Activated B cell treated with CpG ODN at 0.5 μM for 24 hours (primary cell): ENCODE measurements at regions of chr4 and their contacts with region 1.

Region 1: GRCh38 chr4:139301113-139301820 is at the start of gene NAA15:
- DNase-seq: peak; percentile 93
- ATAC-seq: peak; percentile 91
- H3K4me3 Mint-ChIP-seq: peak within 1 kb of the TSS; percentile 99
- H3K27ac Mint-ChIP-seq: peak within 1 kb of the TSS; percentile 98
- H3K4me1 Mint-ChIP-seq: peaks cover 49% of the 10 kb centered on the region
- H3K27me3 Mint-ChIP-seq: no peaks in the 10 kb centered on the region
- CTCF ChIP-seq: no peak
- total RNA-seq, gene NAA15: 62.6 and 66.5 TPM in 2 replicates

Region 2: GRCh38 chr4:138804711-138805110 is 496.6 kb before region 1 on chr4:
- CTCF ChIA-PET with region 1: no interaction called
- POLR2A ChIA-PET with region 1: no interaction called
- intact Hi-C with region 1: no loop called
- DNase-seq: no peak
- ATAC-seq: no peak
- H3K4me3 Mint-ChIP-seq: no peak overlapping the region
- H3K27ac Mint-ChIP-seq: no peak overlapping the region
- H3K4me1 Mint-ChIP-seq: no peaks in the 10 kb centered on the region
- H3K27me3 Mint-ChIP-seq: peaks cover 11% of the 10 kb centered on the region
- CTCF ChIP-seq: no peak

Region 3: GRCh38 chr4:139083956-139084803 is 217.1 kb before region 1 on chr4:
- CTCF ChIA-PET with region 1: interaction called, 11 read pairs
- POLR2A ChIA-PET with region 1: interaction called, 36 read pairs
- intact Hi-C with region 1: loop called (anchors 1 kb)
- DNase-seq: peak; percentile 79
- ATAC-seq: peak; percentile 66
- H3K4me3 Mint-ChIP-seq: peak overlapping the region; percentile 99
- H3K27ac Mint-ChIP-seq: peak overlapping the region; percentile 99
- H3K4me1 Mint-ChIP-seq: peaks cover 38% of the 10 kb centered on the region
- H3K27me3 Mint-ChIP-seq: no peaks in the 10 kb centered on the region
- CTCF ChIP-seq: no peak

Region 4: GRCh38 chr4:139137763-139138162 is 163.5 kb before region 1 on chr4:
- CTCF ChIA-PET with region 1: no interaction called
- POLR2A ChIA-PET with region 1: no interaction called
- intact Hi-C with region 1: no loop called
- DNase-seq: no peak
- ATAC-seq: no peak
- H3K4me3 Mint-ChIP-seq: no peak overlapping the region
- H3K27ac Mint-ChIP-seq: no peak overlapping the region
- H3K4me1 Mint-ChIP-seq: peaks cover 23% of the 10 kb centered on the region
- H3K27me3 Mint-ChIP-seq: no peaks in the 10 kb centered on the region
- CTCF ChIP-seq: no peak

Region 5: GRCh38 chr4:139253713-139254112 is 47.6 kb before region 1 on chr4:
- CTCF ChIA-PET with region 1: no interaction called
- POLR2A ChIA-PET with region 1: no interaction called
- intact Hi-C with region 1: no loop called
- DNase-seq: no peak
- ATAC-seq: no peak
- H3K4me3 Mint-ChIP-seq: no peak overlapping the region
- H3K27ac Mint-ChIP-seq: no peak overlapping the region
- H3K4me1 Mint-ChIP-seq: peaks cover 4% of the 10 kb centered on the region
- H3K27me3 Mint-ChIP-seq: no peaks in the 10 kb centered on the region
- CTCF ChIP-seq: no peak

Region 6: GRCh38 chr4:139315221-139315675 is 14.0 kb after region 1 on chr4:
- CTCF ChIA-PET with region 1: interaction called, 3 read pairs
- POLR2A ChIA-PET with region 1: interaction called, 14 read pairs
- intact Hi-C with region 1: loop called (anchors 1 kb)
- DNase-seq: no peak
- ATAC-seq: peak; percentile 81
- H3K4me3 Mint-ChIP-seq: peak overlapping the region; percentile 71
- H3K27ac Mint-ChIP-seq: peak overlapping the region; percentile 86
- H3K4me1 Mint-ChIP-seq: peaks cover 77% of the 10 kb centered on the region
- H3K27me3 Mint-ChIP-seq: no peaks in the 10 kb centered on the region
- CTCF ChIP-seq: no peak

Region 7: GRCh38 chr4:139337612-139338011 is 36.3 kb after region 1 on chr4:
- CTCF ChIA-PET with region 1: interaction called, 7 read pairs
- POLR2A ChIA-PET with region 1: no interaction called
- intact Hi-C with region 1: loop called (anchors 5 kb)
- DNase-seq: no peak
- ATAC-seq: no peak
- H3K4me3 Mint-ChIP-seq: no peak overlapping the region
- H3K27ac Mint-ChIP-seq: no peak overlapping the region
- H3K4me1 Mint-ChIP-seq: peaks cover 16% of the 10 kb centered on the region
- H3K27me3 Mint-ChIP-seq: no peaks in the 10 kb centered on the region
- CTCF ChIP-seq: no peak

Region 8: GRCh38 chr4:139441029-139441428 is 139.8 kb after region 1 on chr4:
- CTCF ChIA-PET with region 1: no interaction called
- POLR2A ChIA-PET with region 1: no interaction called
- intact Hi-C with region 1: no loop called
- DNase-seq: no peak
- ATAC-seq: no peak
- H3K4me3 Mint-ChIP-seq: no peak overlapping the region
- H3K27ac Mint-ChIP-seq: no peak overlapping the region
- H3K4me1 Mint-ChIP-seq: peaks cover 7% of the 10 kb centered on the region
- H3K27me3 Mint-ChIP-seq: no peaks in the 10 kb centered on the region
- CTCF ChIP-seq: no peak